Sigmoid colon (tissue), 7 donors: ENCODE measurements at regions of chr7 and their contacts with region 1.

Region 1: GRCh38 chr7:146185844-146186243 is 69.2 kb downstream of the CNTNAP2 start:
- DNase-seq: no peak
- H3K4me3 ChIP-seq: no peak overlapping the region
- H3K27ac ChIP-seq: no peak overlapping the region
- H3K4me1 ChIP-seq: no peaks in the 10 kb centered on the region
- H3K27me3 ChIP-seq: no peaks in the 10 kb centered on the region
- CTCF ChIP-seq: no peak
- EP300 ChIP-seq: no peak
- POLR2A ChIP-seq: no peak

Region 2: DNA sequence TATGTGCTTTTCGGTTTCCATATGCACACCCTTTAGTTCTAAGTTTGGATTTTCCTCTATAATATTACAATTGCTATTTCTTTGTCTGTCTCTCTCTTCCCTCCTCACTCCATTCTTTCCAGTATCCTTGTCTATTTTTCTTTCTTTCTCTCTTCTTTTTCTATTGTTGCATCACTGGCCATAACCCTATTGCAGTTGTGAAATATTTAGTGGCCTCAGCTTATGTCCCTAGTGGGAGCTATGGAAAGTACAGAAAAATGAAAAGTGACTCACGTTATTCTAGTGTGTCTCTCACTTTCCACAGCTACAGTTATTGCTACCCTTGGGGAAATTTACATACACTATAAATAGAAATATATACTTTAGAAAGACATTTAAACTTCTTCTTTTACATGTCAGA is 10.1 kb before region 1 on chr7:
- intact Hi-C with region 1: loop called (anchors 2 kb)
- DNase-seq: no peak
- H3K4me3 ChIP-seq: no peak overlapping the region
- H3K27ac ChIP-seq: no peak overlapping the region
- H3K4me1 ChIP-seq: no peaks in the 10 kb centered on the region
- H3K27me3 ChIP-seq: no peaks in the 10 kb centered on the region
- CTCF ChIP-seq: no peak
- EP300 ChIP-seq: no peak
- POLR2A ChIP-seq: no peak